Left colon (tissue), 2 donors: ENCODE measurements at regions of chr12 and their contacts with region 1.

Region 1: DNA sequence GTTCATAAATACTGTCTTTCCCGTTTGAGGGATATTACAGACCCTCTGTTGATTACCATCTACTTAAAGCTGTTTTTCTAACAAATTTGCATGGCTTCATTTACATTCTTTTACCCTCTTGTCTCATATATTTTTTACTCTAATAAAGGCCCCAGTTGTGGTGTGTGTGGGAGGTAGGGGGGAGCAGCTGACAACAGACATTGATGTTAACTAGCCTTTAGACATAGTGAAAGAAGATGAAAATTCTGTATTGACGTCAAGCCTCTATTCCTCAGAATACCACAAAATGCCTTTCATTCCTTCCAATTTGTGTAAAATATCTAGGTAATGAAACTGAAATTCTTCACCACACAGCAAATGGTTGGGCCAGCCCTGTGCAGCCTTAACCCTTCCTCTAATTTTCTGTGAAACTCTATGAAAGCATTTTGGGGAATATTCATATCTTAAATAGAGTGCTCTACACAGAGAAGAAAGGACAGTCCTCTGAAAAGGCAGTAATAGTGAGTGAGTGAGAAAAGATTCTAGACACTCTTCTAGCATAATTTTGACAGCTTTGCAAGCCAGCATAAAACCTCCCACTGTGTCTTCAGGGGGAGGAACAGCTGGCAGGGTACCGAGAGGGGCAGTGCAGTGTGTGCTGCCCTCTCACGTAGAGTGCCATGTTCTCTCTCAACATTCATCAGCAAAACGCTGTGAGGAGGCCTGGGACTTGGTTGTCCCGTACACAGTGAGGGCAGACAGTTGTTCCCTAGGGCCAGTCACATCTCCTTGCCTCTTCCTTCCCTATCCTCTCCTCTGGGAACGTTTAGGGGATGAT is 20.1 kb upstream of the CERS5 start:
- DNase-seq: no peak
- ATAC-seq: no peak

Region 2: DNA sequence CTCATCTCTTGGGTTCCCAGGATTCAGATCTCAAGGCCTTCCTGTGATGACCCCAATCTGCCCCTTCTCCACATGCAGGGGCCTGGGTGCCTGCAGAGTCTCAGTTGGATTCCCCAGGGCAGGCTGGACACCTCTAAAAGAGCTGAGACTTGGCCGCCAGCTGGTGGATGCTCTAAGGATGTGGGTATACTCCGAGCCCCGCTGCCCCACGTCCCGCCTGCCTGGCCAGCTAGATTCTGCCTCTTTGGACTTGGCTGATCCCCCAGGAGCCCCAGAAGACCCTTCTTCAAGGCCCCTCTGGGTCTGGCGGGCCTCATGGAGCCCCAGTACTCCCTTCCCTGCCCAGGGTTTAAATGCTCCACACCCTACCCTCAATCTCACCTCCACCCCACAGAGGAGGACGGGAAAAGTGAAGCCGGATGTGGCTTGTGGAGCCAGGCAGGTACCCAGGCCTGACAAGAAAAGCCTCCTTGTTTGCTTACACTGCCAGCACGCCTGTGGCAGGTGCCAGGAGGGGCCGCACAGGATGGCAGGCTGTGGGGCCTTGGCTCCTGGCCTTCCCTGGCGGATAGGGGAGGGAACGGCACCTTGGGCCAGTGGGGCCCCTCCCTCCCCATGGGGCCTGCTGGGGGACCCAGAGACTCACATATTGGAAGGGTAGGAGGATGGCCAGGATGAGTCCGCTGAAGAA is 298.7 kb before region 1 on chr12:
- intact Hi-C with region 1: no loop called
- DNase-seq: peak; percentile 28 to 40
- ATAC-seq: peak; percentile 63

Region 3: GRCh38 chr12:50314629-50315312 is 127.5 kb after region 1 on chr12:
- intact Hi-C with region 1: loop called in 1 of 2 experiments (anchors 5 kb)
- DNase-seq: no peak
- ATAC-seq: peak; percentile 44